Left ventricle myocardium superior (tissue), 1 donor: ENCODE measurements at regions of chr4 and their contacts with region 1.

Region 1: GRCh38 chr4:72468904-72469502 is 100.0 kb downstream of the ADAMTS3 start:
- DNase-seq: no peak
- ATAC-seq: no peak

Region 2: GRCh38 chr4:72118017-72118416 is 351.0 kb before region 1 on chr4:
- intact Hi-C with region 1: no loop called
- DNase-seq: no peak
- ATAC-seq: no peak

Region 3: GRCh38 chr4:72295966-72296557 is 172.9 kb before region 1 on chr4:
- intact Hi-C with region 1: loop called (anchors 10 kb)
- DNase-seq: no peak
- ATAC-seq: peak; percentile 76

Region 4: GRCh38 chr4:72326692-72327632 is 142.0 kb before region 1 on chr4:
- intact Hi-C with region 1: loop called (anchors 5 kb)
- DNase-seq: no peak
- ATAC-seq: no peak

Region 5: DNA sequence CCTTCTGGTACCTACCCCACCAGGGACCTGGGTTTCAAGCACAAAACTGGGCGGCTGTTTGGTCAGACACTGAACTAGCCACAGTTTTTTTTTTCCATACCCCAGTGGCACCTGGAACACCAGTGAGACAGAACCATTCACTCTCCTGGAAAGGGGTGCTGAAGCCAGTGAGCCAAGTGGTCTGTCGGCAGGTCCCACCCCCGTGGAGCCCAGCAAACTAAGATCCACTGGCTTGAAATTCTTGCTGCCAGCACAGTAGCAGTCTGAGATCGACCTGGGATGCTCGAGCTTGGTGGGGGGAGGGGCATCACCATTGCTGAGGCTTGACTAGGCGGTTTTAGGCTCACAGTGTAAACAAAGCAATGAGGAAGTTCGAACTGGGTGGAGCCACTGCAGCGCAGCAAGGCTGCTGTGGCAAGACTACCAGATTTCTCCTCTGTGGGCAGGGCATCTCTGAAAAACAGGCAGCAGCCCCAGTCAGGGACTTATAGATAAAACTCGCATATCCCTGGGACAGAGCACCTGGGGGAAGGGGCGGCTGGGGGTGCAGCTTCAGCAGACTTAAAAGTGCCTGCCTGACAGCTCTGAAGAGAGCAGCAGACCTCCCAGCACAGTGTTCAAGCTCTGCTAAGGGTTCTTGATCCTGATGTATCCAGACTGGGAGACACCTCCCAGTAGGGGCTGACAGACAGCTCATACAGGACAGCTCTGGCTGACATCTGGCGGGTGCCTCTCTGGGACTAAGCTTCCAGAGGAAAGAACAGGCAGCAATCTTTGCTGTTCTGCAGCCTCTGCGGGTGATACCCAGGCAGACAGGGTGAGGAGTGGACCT is 377.5 kb after region 1 on chr4:
- intact Hi-C with region 1: no loop called
- DNase-seq: no peak
- ATAC-seq: no peak